ENCODE measurements at regions of chr6 and their contacts with region 1.

Region 1: DNA sequence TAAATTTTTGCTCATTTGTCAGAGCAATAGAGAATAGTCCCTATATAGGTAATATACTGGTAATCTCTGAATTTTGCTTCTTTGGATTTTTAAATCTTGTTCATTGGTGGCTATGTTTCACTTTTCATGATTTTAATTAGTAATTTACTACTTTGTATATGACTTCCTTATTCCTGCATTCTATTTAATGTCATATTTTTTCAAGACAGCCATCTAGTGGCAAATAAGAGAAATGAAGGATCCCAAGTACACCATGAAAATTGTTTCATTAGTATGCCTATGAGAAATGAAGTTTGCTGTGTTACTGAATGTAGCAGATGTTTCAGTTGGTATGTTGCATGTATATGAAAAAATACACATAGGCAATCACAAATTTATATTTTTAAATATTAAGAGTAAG is 82.4 kb downstream of the ZNF292 start:
- DNase-seq: no peak
- H3K4me3 ChIP-seq: no peak overlapping the region
- H3K27ac ChIP-seq: no peak overlapping the region
- H3K4me1 ChIP-seq: no peaks in the 10 kb centered on the region
- H3K27me3 ChIP-seq: no peaks in the 10 kb centered on the region
- CTCF ChIP-seq: peak; percentile 43 to 67 (median 56)
- EP300 ChIP-seq: no peak
- POLR2A ChIP-seq: no peak

Region 2: DNA sequence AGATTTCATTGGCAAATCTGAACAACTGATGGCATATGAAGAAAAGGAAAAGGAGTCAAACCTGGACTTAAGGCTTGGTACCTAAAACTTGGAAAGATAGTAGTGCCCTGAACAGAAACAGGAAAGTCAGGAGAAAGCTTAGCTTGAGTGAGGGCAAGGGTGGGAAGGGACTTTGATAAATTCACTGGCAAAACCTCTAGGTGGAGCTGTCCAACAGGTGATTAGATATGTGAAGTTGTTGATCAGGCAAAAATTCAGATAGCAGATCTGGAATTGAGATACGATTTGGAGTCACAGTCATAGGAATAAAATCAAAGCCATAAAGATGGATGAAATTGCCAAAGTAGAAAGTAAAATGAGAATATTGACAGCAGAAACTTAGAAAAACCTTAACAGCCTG is 98.6 kb before region 1 on chr6:
- in situ Hi-C with region 1: loop called (anchors 10 to 25 kb)
- intact Hi-C with region 1: loop called (anchors 10 kb)
- DNase-seq: peak; percentile 17
- H3K4me3 ChIP-seq: no peak overlapping the region
- H3K27ac ChIP-seq: no peak overlapping the region
- H3K4me1 ChIP-seq: no peaks in the 10 kb centered on the region
- H3K27me3 ChIP-seq: no peaks in the 10 kb centered on the region
- CTCF ChIP-seq: peak; percentile 71 to 81 (median 73)
- EP300 ChIP-seq: no peak
- POLR2A ChIP-seq: no peak

Region 3: GRCh38 chr6:87146363-87146762 is 91.4 kb before region 1 on chr6:
- in situ Hi-C with region 1: loop called (anchors 10 to 25 kb)
- intact Hi-C with region 1: no loop called
- DNase-seq: no peak
- H3K4me3 ChIP-seq: no peak overlapping the region
- H3K27ac ChIP-seq: no peak overlapping the region
- H3K4me1 ChIP-seq: peaks cover 0 to 3% (median 2%) of the 10 kb centered on the region in 4 donors
- H3K27me3 ChIP-seq: no peaks in the 10 kb centered on the region
- CTCF ChIP-seq: no peak
- EP300 ChIP-seq: no peak
- POLR2A ChIP-seq: no peak

Measured in transverse colon (tissue), 4 donors.